ENCODE measurements at regions of chr14 and their contacts with region 1.

Region 1: DNA sequence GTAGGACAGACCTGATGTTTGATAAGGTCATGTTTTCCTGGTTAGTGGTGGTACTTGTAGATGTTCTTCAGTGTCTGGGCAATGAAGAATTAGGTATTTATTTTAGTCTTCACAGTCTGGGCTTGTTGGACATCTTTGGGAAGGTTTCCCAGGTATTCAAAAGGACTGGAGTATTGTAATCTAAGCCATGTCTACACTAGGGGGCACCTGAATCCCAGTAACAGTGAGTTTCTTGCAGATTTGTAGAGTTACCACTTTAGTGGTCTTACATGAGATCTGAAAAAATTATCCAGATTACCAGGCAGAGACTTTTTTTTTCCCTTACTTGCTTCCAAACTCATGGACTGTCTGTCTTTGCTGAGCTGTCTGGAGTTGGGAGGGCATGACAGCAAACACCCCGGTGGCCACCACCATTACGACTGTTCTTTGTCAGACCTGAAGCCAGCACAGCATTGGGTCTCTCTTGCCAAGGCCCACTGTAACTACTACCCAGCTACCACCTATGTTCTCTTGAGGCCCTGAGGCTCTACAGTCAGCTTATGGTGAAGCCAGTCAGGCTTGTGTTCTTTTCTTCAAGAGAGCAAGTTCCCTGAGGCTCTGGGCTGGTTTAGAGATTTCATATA is 820.7 kb upstream of the FBXO33 start:
- DNase-seq: no peak
- ATAC-seq: no peak; the same call in 2 of the 3 replicates
- H3K4me3 ChIP-seq: no peak overlapping the region
- H3K27ac ChIP-seq: no peak overlapping the region
- H3K4me1 ChIP-seq: no peaks in the 10 kb centered on the region
- H3K27me3 ChIP-seq: no peaks in the 10 kb centered on the region
- CTCF ChIP-seq: no peak
- EP300 ChIP-seq: no peak
- POLR2A ChIP-seq: no peak
- RAD21 ChIP-seq: no peak

Region 2: GRCh38 chr14:40204441-40205175 is 48.3 kb before region 1 on chr14:
- CTCF ChIA-PET with region 1: no interaction called
- POLR2A ChIA-PET with region 1: no interaction called
- in situ Hi-C with region 1: no loop called
- intact Hi-C with region 1: loop called (anchors 2 kb)
- DNase-seq: peak; percentile 17
- ATAC-seq: peak; percentile 91
- H3K4me3 ChIP-seq: no peak overlapping the region
- H3K27ac ChIP-seq: no peak overlapping the region
- H3K4me1 ChIP-seq: no peaks in the 10 kb centered on the region
- H3K27me3 ChIP-seq: no peaks in the 10 kb centered on the region
- CTCF ChIP-seq: no peak
- EP300 ChIP-seq: no peak
- POLR2A ChIP-seq: no peak
- RAD21 ChIP-seq: no peak

Measured in HepG2 (cell line).